ENCODE measurements at regions of chr1 and their contacts with region 1.

Region 1: GRCh38 chr1:236759252-236759859 is 35.7 kb upstream of the MTR start:
- DNase-seq: peak in 1 of 2 donors; percentile 76
- ATAC-seq: peak in 2 of 3 donors; percentile 47 to 67
- H3K4me3 ChIP-seq: no peak overlapping the region
- H3K4me3 Mint-ChIP-seq: no peak overlapping the region
- H3K27ac ChIP-seq: no peak overlapping the region
- H3K27ac Mint-ChIP-seq: no peak overlapping the region
- H3K4me1 ChIP-seq: no peaks in the 10 kb centered on the region
- H3K4me1 Mint-ChIP-seq: peaks cover 0 to 5% of the 10 kb centered on the region in 2 donors
- H3K27me3 ChIP-seq: no peaks in the 10 kb centered on the region
- H3K27me3 Mint-ChIP-seq: peaks cover 4 to 12% of the 10 kb centered on the region in 2 donors
- CTCF ChIP-seq: peak; percentile 82

Region 2: DNA sequence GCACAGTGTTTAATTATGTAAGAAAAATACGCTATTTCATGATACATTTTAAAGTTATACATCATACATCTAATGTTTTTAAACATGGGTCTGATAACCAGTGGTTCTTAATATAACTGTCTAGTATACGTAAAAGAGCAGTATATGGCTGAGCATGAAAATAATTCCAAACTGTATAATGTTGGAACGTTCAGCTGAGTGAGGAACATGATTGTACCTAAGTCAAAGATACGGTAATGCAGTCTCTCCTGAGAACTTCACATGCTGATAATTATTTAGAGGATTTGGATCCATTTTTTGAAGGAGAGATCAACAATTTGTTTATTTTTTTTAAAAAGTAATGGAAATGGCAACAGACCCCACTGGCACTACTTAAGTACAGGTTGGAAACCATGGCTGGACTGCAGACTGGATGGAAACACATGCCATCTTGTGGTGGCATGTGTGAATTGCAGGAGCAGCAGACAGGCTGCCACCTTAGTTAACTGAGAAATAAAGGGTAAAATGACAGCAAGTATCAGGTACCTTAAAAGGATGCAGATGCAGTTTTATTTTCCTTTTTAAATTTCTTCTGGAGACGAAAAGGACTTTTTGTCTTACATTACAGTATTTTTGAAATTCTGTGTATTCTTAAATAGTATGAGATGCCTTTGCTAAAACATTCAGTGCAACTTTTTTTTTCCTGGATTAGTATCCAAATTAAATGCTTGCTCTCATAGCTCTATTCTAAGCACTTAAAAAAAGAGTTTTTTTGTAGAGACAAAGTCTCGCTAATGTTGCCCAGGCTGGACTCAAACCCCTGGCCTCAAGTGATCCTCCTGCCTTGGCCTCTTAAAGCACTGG is 109.5 kb after region 1 on chr1:
- intact Hi-C with region 1: loop called (anchors 1 kb)
- DNase-seq: peak; percentile 24 to 79
- ATAC-seq: peak; percentile 67 to 78 (median 72)
- H3K4me3 ChIP-seq: no peak overlapping the region
- H3K4me3 Mint-ChIP-seq: no peak overlapping the region
- H3K27ac ChIP-seq: no peak overlapping the region
- H3K27ac Mint-ChIP-seq: peak overlapping the region in 1 of 2 donors; percentile 22
- H3K4me1 ChIP-seq: no peaks in the 10 kb centered on the region
- H3K4me1 Mint-ChIP-seq: peaks cover 0 to 4% of the 10 kb centered on the region in 2 donors
- H3K27me3 ChIP-seq: no peaks in the 10 kb centered on the region
- H3K27me3 Mint-ChIP-seq: no peaks in the 10 kb centered on the region
- CTCF ChIP-seq: peak; percentile 97

Region 3: GRCh38 chr1:237562242-237562823 is 803.0 kb after region 1 on chr1:
- intact Hi-C with region 1: loop called (anchors 5 kb)
- DNase-seq: peak in 1 of 2 donors; percentile 66
- ATAC-seq: peak in 2 of 3 donors; percentile 34 to 64
- H3K4me3 ChIP-seq: no peak overlapping the region
- H3K4me3 Mint-ChIP-seq: no peak overlapping the region
- H3K27ac ChIP-seq: no peak overlapping the region
- H3K27ac Mint-ChIP-seq: no peak overlapping the region
- H3K4me1 ChIP-seq: no peaks in the 10 kb centered on the region
- H3K4me1 Mint-ChIP-seq: no peaks in the 10 kb centered on the region
- H3K27me3 ChIP-seq: no peaks in the 10 kb centered on the region
- H3K27me3 Mint-ChIP-seq: peaks cover 0 to 5% of the 10 kb centered on the region in 2 donors
- CTCF ChIP-seq: peak; percentile 79

Measured in natural killer cell (primary cell).